ENCODE measurements at regions of chr6 and their contacts with region 1.

Region 1: DNA sequence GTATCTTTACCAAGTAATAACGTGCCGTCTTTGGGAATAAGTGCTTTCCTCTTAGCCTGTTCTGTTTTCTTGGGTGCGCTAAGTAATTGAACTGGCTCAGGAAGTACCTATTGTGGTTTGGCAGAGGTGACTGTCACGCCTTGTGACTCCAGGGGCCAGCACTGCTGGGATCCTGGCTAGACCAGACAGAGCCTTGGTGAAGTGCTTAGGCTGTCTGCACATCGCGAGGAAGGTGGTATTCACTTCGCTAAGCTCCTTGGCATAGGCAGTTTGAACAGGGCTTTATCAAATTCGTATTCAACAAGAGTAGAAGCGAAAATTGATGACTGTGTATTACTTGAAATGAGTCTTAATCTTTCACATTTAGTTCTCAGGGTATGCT is 17.6 kb downstream of the PRDM1 start:
- DNase-seq: peak; percentile 53
- ATAC-seq: peak; percentile 38
- H3K4me3 Mint-ChIP-seq: peak overlapping the region; percentile 78
- H3K27ac Mint-ChIP-seq: peak overlapping the region; percentile 96
- H3K4me1 Mint-ChIP-seq: peaks cover 79% of the 10 kb centered on the region
- H3K27me3 Mint-ChIP-seq: peaks cover 10% of the 10 kb centered on the region
- CTCF ChIP-seq: no peak

Region 2: GRCh38 chr6:106092279-106092678 is 11.4 kb before region 1 on chr6:
- CTCF ChIA-PET with region 1: interaction called, 9 read pairs
- POLR2A ChIA-PET with region 1: interaction called, 40 read pairs
- intact Hi-C with region 1: no loop called
- DNase-seq: no peak
- ATAC-seq: no peak
- H3K4me3 Mint-ChIP-seq: peak overlapping the region; percentile 23
- H3K27ac Mint-ChIP-seq: no peak overlapping the region
- H3K4me1 Mint-ChIP-seq: peaks cover 61% of the 10 kb centered on the region
- H3K27me3 Mint-ChIP-seq: peaks cover 46% of the 10 kb centered on the region
- CTCF ChIP-seq: no peak

Region 3: DNA sequence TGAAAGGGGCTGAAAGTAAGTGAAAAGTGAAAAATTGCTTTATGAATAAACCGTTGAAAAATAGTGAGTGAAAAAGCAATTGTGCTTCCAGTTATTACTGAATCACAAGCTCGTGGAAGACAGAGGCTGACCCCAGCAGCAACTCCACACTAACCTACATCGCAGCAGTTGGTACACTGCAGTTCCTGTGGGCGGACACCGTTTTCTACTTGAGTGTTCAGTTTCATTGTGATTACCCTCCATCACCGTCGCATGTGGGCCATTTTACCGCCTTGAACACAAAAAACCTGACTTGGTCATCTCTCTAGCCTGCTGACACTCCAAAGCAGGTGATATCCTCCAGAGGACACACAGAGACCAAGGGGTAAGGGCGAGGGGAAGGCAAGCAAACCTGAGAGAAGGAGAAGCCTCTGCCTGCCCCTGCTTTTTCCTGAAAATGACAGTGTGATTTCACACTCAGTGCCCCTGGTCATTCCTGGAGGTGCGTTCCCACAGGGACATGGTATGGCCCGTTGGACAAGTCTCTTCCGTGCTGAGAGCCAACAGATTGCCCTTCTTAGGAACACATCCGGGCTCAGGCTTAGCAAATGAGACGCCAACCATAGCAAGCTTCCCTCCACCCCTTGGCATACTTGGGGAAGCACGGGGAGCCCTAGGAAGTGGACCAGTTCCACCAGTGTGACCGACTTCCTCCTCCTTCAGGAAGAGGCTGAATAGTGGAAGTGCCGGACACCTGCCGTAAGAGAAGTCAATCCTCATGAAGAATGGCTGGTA is 11.0 kb after region 1 on chr6:
- CTCF ChIA-PET with region 1: interaction called, 4 read pairs
- POLR2A ChIA-PET with region 1: interaction called, 28 read pairs
- intact Hi-C with region 1: loop called (anchors 2 kb)
- DNase-seq: peak; percentile 93
- ATAC-seq: peak; percentile 74
- H3K4me3 Mint-ChIP-seq: peak overlapping the region; percentile 46
- H3K27ac Mint-ChIP-seq: peak overlapping the region; percentile 71
- H3K4me1 Mint-ChIP-seq: peaks cover 89% of the 10 kb centered on the region
- H3K27me3 Mint-ChIP-seq: peaks cover 18% of the 10 kb centered on the region
- CTCF ChIP-seq: no peak

Region 4: DNA sequence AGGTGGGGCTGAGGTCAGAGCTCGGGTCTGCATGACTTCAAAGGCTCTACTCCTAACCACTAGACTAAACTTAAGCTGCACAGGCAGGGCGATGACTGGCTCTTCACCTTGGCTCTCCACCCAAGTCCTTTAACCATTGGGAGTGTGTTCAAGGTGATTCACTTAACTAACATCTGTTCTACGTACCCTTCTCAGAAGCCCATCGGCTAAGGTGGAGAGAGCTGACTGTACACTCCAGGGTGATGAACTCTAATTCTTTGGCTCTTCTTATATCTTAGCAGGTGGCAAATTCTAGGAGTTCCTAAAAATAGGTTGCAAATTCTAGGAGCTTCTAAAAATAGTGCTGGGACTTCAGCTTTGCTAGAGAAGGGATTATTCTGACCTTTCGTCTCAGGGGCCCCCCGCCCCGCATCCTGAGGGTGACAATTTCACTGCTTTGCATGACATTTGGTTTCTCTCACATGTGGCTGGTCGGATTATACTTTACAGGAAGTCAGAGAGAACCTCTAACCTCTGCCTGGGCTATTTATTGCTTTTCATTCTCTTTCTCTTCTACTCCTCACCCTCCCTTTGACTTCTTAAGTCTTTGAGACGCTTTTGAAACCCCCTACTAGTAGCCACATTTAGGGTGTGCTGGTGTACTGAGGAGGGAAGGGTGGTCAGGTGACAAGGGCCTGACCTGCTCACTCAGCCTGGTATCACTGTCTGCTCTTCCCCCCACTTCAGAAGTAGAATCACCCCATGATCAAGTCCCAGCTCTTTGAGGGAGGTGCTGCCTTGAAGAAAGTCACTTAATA is 37.9 kb after region 1 on chr6:
- CTCF ChIA-PET with region 1: interaction called, 6 read pairs
- POLR2A ChIA-PET with region 1: interaction called, 11 read pairs
- intact Hi-C with region 1: loop called (anchors 1 kb)
- DNase-seq: peak; percentile 96
- ATAC-seq: peak; percentile 89
- H3K4me3 Mint-ChIP-seq: peak overlapping the region; percentile 20
- H3K27ac Mint-ChIP-seq: peak overlapping the region; percentile 96
- H3K4me1 Mint-ChIP-seq: peaks cover 64% of the 10 kb centered on the region
- H3K27me3 Mint-ChIP-seq: peaks cover 2% of the 10 kb centered on the region
- CTCF ChIP-seq: no peak

Measured in activated CD8-positive, alpha-beta T cell treated with anti-CD3 and anti-CD28 coated beads for 36 hours (primary cell).